Endothelial cell of umbilical vein (primary cell): ENCODE measurements at regions of chr10 and their contacts with region 1.

Region 1: GRCh38 chr10:62437696-62438095 is 63.5 kb downstream of the ZNF365 start:
- DNase-seq: peak; percentile 73
- H3K4me3 ChIP-seq: no peak overlapping the region
- H3K27ac ChIP-seq: no peak overlapping the region
- H3K4me1 ChIP-seq: peaks cover 14% of the 10 kb centered on the region
- H3K27me3 ChIP-seq: no peaks in the 10 kb centered on the region
- CTCF ChIP-seq: peak; percentile 54 to 58
- POLR2A ChIP-seq: no peak

Region 2: GRCh38 chr10:62302760-62303159 is 134.9 kb before region 1 on chr10:
- CTCF ChIA-PET with region 1: no interaction called
- POLR2A ChIA-PET with region 1: no interaction called
- dilution Hi-C with region 1: no loop called
- intact Hi-C with region 1: no loop called
- DNase-seq: no peak
- H3K4me3 ChIP-seq: no peak overlapping the region
- H3K27ac ChIP-seq: no peak overlapping the region
- H3K4me1 ChIP-seq: no peaks in the 10 kb centered on the region
- H3K27me3 ChIP-seq: peaks cover 0 to 3% of the 10 kb centered on the region in 2 experiments
- CTCF ChIP-seq: no peak
- POLR2A ChIP-seq: no peak

Region 3: DNA sequence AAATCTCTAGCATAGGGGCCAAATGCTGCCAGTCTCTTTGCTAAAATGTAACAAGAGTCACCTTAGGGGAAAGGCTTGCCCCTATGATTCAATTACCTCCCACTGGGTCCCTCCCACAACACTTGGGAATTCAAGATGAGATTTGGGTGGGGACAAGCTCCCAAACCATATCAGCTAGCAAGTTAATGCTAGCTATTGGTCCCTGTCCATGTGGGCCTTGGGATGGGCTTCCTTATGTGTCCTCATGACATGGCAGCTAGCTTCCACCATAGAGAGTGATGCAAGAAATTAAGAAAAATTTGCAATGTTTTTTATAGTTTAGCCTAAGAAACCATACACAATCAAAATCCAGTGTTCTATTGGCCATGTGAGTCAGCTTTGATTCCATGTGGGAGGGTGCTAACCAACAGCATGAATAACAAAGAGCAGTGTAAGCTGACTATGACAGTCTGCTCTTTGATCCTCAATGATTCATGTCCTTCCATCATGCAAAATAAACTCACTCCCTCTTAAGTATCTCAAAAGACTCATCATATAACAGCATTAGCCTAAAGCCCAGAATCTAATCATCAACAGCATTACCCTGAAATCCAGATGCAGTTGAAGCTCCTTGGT is 85.2 kb before region 1 on chr10:
- CTCF ChIA-PET with region 1: no interaction called
- POLR2A ChIA-PET with region 1: no interaction called
- dilution Hi-C with region 1: no loop called
- intact Hi-C with region 1: no loop called
- DNase-seq: no peak
- H3K4me3 ChIP-seq: no peak overlapping the region
- H3K27ac ChIP-seq: no peak overlapping the region
- H3K4me1 ChIP-seq: no peaks in the 10 kb centered on the region
- H3K27me3 ChIP-seq: no peaks in the 10 kb centered on the region
- CTCF ChIP-seq: no peak
- POLR2A ChIP-seq: no peak

Region 4: DNA sequence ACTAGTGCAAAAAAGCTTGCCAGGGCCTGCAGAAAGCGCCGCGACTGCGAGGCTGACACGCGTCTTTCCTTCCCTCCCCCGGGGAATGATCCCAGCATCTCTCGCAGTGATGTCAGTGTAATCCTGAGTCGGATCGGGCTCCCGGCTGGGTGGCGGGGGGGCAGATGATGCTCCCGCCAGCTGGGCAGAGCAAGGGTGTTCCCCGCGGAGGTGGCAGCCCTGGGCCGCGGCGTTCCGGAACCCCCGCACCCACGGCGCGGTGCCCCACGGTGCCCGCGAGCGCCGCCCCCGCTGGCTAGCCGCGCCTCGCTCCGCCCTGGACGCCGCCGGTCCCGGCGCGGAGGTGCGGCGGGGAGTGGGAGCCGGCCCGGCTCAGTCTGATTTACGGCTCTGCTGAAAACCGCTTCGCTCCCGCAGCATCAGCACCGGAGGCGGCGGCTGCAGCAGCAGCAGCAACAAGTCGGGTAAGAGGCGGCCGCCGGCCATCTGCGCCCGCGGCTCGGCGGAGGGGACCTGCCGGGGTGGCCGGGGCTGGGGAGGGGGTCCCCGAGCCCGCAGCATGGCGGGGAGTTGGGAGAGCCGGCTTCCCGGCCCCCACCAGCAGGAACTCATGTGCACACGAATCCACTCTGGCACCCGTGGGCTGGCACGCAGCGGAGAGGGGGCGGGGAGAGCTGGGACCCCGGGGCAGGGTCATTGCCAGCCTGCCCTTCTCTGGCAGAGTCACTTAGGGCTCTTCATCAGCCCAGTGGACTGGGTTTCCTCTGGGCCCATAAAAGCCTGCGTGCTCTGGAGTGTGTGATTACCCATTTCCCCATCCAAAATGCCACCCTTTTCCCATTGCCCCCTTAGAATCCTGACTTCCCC is 63.5 kb before region 1 on chr10 and contains the start of gene ZNF365:
- CTCF ChIA-PET with region 1: no interaction called
- POLR2A ChIA-PET with region 1: no interaction called
- dilution Hi-C with region 1: no loop called
- intact Hi-C with region 1: loop called (anchors 1 kb)
- DNase-seq: no peak
- H3K4me3 ChIP-seq: peak within 1 kb of the TSS; percentile 39 to 52 (median 51)
- H3K27ac ChIP-seq: peak within 1 kb of the TSS; percentile 5
- H3K4me1 ChIP-seq: peaks cover 16% of the 10 kb centered on the region
- H3K27me3 ChIP-seq: no peaks in the 10 kb centered on the region
- CTCF ChIP-seq: no peak
- POLR2A ChIP-seq: no peak
- total RNA-seq, gene ZNF365: 2.9 and 5.5 TPM in 2 replicates

Region 5: DNA sequence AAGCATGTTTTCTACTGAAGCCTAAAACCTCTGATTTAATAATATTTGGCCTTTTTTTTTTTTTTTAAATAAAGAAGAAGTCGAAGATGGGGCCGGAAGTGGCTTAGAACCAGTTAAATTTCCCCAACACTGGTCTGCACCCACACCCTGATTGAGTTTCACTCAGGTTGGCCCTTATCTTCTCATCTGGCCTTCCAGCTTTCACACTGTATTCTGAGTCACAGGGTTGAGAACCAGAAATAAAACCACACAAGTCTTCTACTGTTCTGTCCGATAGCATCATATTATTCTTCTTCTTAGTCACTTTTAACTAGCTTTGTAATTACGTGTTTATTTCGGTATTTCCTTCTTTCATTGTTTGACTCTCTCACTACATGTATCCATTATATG is 53.6 kb before region 1 on chr10:
- CTCF ChIA-PET with region 1: interaction called, 3 read pairs
- POLR2A ChIA-PET with region 1: no interaction called
- dilution Hi-C with region 1: no loop called
- intact Hi-C with region 1: loop called (anchors 1 kb)
- DNase-seq: peak; percentile 31
- H3K4me3 ChIP-seq: peak overlapping the region in 1 of 3 experiments; percentile 48
- H3K27ac ChIP-seq: peak overlapping the region; percentile 95
- H3K4me1 ChIP-seq: peaks cover 53% of the 10 kb centered on the region
- H3K27me3 ChIP-seq: no peaks in the 10 kb centered on the region
- CTCF ChIP-seq: no peak
- POLR2A ChIP-seq: no peak

Region 6: GRCh38 chr10:62422068-62422590 is 15.6 kb before region 1 on chr10:
- CTCF ChIA-PET with region 1: interaction called, 15 read pairs
- POLR2A ChIA-PET with region 1: no interaction called
- dilution Hi-C with region 1: no loop called
- intact Hi-C with region 1: no loop called
- DNase-seq: no peak
- H3K4me3 ChIP-seq: no peak overlapping the region
- H3K27ac ChIP-seq: no peak overlapping the region
- H3K4me1 ChIP-seq: no peaks in the 10 kb centered on the region
- H3K27me3 ChIP-seq: no peaks in the 10 kb centered on the region
- CTCF ChIP-seq: no peak
- POLR2A ChIP-seq: no peak

Region 7: DNA sequence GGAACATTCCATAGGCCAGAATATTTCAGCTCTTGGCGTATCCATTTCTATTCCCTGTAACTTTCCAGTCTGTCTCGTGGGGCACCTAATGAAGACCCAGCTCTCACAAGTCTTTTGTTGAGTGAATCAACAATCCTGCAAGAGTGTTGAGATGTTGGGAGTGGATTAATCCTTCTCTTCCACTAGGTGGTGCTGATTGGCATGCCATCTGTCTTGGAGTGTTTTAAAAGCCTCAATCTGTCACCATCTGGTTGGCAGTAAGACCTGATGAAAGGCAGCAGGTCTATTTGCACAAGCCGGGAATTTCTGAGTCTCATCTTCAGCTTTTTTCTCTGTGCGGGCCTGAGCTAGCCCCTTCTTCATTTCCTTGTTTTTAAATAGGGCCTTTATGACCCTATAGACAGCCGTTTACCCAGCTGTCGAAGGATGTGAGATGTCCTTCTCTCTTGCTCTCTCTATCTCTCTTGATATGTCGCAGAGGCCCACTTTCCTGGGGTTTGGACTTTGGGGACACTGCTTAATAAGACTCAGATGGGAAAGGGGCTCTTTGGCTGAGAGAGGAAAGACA is 117.0 kb after region 1 on chr10:
- CTCF ChIA-PET with region 1: no interaction called
- POLR2A ChIA-PET with region 1: no interaction called
- dilution Hi-C with region 1: no loop called
- intact Hi-C with region 1: loop called (anchors 5 kb)
- DNase-seq: peak; percentile 13
- H3K4me3 ChIP-seq: no peak overlapping the region
- H3K27ac ChIP-seq: no peak overlapping the region
- H3K4me1 ChIP-seq: no peaks in the 10 kb centered on the region
- H3K27me3 ChIP-seq: no peaks in the 10 kb centered on the region
- CTCF ChIP-seq: peak; percentile 35 to 39
- POLR2A ChIP-seq: no peak

Region 8: DNA sequence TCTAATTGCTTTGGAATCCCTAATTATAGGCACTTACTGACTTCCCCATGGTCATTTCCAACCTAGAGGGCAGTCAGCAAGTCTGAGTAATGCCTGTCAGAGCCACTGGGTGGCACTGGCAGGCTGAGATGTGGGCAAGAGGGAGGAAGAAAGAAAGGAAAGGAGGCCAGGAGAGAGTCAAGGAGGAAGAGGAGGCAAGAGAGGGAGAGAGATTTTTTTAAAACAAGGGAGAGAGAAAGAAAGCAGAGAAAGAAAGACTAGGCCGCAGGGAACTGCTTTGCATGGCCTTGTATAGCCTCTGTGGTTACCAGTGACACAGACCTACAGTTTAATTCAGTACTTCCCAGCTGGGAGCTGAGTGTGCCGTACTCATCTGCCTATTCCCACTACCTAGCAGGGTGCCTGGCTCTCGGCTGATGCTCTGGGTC is 156.4 kb after region 1 on chr10:
- CTCF ChIA-PET with region 1: interaction called, 4 read pairs
- POLR2A ChIA-PET with region 1: no interaction called
- dilution Hi-C with region 1: no loop called
- intact Hi-C with region 1: loop called (anchors 2 kb)
- DNase-seq: peak; percentile 51
- H3K4me3 ChIP-seq: no peak overlapping the region
- H3K27ac ChIP-seq: no peak overlapping the region
- H3K4me1 ChIP-seq: peaks cover 7% of the 10 kb centered on the region
- H3K27me3 ChIP-seq: peaks cover 0 to 2% of the 10 kb centered on the region in 2 experiments
- CTCF ChIP-seq: peak; percentile 74 to 81
- POLR2A ChIP-seq: no peak

Region 9: DNA sequence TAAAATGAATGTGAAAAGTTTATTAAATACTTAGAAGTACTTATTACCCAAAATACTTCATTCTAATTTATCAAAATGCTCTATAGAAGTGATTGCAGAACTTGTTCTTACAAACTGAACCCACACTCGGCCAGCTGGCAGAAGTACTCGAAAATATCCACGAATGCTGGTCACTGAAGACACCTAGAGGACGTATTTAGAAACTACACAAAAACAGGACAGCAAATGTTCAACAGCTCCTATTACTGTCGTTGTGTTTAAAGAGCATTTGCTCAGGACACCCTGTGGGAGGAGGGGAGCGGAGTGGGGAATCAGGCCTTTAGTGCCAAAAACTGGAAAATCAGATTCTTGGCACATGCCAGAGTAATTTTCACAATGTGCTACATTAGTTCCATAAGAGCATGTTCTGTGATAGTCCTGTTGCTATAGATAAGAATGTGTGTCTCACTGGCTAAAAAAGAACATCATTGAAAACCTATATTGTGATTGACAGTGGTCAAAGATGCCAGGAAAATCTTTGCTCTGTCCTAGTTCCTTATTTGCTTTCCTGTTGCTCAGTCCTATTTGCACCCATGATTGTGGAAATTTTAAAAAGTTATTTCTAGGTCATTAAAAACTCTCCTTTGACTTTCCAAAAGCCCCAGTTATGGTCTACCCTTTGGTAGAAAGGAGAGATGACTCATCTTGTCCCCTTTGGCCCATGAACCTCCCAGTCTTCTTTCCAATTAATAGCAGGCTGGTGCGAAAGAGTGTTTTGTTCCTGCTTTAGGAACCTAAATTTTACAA is 646.4 kb after region 1 on chr10:
- CTCF ChIA-PET with region 1: interaction called, 10 read pairs
- POLR2A ChIA-PET with region 1: no interaction called
- dilution Hi-C with region 1: no loop called
- intact Hi-C with region 1: loop called (anchors 2 kb)
- DNase-seq: peak; percentile 67
- H3K4me3 ChIP-seq: no peak overlapping the region
- H3K27ac ChIP-seq: no peak overlapping the region
- H3K4me1 ChIP-seq: no peaks in the 10 kb centered on the region
- H3K27me3 ChIP-seq: no peaks in the 10 kb centered on the region
- CTCF ChIP-seq: peak; percentile 31 to 46
- POLR2A ChIP-seq: no peak